ENCODE measurements at regions of chr2 and their contacts with region 1.

Region 1: GRCh38 chr2:20097879-20098714 is 46.7 kb upstream of the LAPTM4A start:
- DNase-seq: peak; percentile 87
- ATAC-seq: peak; percentile 85

Region 2: DNA sequence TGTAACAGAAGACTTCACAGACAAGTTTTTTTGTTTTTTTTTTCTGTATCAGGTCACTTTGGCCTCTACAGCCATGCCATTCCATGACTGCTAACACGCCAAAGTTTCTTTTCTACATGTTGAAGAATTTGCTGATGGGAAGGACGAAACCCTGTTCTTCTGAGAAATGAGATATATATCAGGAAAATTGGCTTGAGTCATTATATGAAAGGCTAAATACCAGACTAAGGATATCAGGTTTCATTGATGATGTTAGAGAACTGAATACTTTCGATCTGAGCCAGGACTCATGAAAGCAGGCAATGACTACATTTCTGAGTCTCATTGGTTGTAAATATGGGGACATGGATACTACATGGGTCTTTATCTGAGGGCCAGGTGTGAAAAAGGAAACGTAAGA is 921.1 kb before region 1 on chr2:
- intact Hi-C with region 1: no loop called
- DNase-seq: no peak
- ATAC-seq: no peak

Region 3: GRCh38 chr2:19955544-19956422 is 142.3 kb before region 1 on chr2:
- intact Hi-C with region 1: loop called (anchors 5 kb)
- DNase-seq: peak; percentile 47
- ATAC-seq: peak; percentile 88

Region 4: GRCh38 chr2:20012299-20013125 is 85.6 kb before region 1 on chr2 and contains the start of gene MATN3:
- intact Hi-C with region 1: loop called (anchors 5 kb)
- DNase-seq: peak; percentile 66
- ATAC-seq: peak; percentile 90
- total RNA-seq, gene MATN3: 0.32 TPM

Measured in left ventricle myocardium superior (tissue), 1 donor.